ENCODE measurements at regions of chr12 and their contacts with region 1.

Region 1: DNA sequence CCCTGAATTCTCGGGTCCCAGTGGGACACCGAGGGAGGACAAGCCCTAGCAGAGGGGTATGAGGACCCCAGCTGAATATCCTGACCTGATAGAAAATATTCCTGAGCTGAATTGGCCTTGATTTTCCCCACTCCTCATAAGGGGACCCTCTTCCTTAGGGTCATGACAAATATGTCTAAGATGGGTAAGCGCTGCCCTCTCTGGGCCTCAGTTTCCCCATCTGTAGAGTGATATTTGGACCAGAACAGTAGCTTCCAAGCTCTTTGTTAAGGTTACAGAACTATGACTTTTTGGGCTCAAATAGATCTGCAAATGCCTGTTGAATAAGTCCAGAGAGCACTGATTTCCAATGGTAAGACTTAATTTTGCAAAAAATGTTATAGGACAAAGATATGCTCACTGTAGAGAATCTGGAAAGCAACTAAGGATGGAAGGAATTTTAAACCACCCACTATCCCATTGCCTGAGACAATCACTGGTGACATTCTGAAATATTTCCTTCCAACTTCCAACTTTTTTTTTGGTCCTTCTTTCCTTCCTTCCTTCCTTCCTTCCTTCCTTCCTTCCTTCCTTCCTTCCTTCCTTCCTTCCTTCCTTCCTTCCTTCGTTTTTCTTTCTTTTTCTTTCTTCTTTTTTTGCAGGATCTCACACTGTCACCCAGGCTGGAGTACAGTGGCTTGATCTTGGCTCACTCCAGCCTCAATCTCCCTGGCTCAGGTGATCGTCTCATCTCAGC is 32.0 kb downstream of the MYL2 start:
- DNase-seq: no peak
- ATAC-seq: no peak
- H3K4me3 Mint-ChIP-seq: no peak overlapping the region
- H3K27ac Mint-ChIP-seq: no peak overlapping the region
- H3K4me1 Mint-ChIP-seq: peaks cover 2% of the 10 kb centered on the region
- H3K27me3 Mint-ChIP-seq: peaks cover 3% of the 10 kb centered on the region
- CTCF ChIP-seq: no peak

Region 2: GRCh38 chr12:110704748-110705147 is 183.7 kb before region 1 on chr12:
- CTCF ChIA-PET with region 1: interaction called, 12 read pairs
- POLR2A ChIA-PET with region 1: no interaction called
- DNase-seq: peak; percentile 42
- ATAC-seq: peak; percentile 88
- H3K4me3 Mint-ChIP-seq: no peak overlapping the region
- H3K27ac Mint-ChIP-seq: no peak overlapping the region
- H3K4me1 Mint-ChIP-seq: 0 out of 2 replicates have a peak, but pooled peaks cover 2% of the 10 kb centered on the region
- H3K27me3 Mint-ChIP-seq: no peaks in the 10 kb centered on the region; the same call in 1 of the 2 replicates
- CTCF ChIP-seq: no peak

Region 3: GRCh38 chr12:110809149-110809548 is 79.3 kb before region 1 on chr12:
- CTCF ChIA-PET with region 1: no interaction called
- POLR2A ChIA-PET with region 1: no interaction called
- DNase-seq: no peak
- ATAC-seq: no peak; the same call in 1 of the 2 replicates
- H3K4me3 Mint-ChIP-seq: no peak overlapping the region
- H3K27ac Mint-ChIP-seq: no peak overlapping the region
- H3K4me1 Mint-ChIP-seq: peaks cover 27% of the 10 kb centered on the region
- H3K27me3 Mint-ChIP-seq: peaks cover 56% of the 10 kb centered on the region
- CTCF ChIP-seq: no peak

Region 4: DNA sequence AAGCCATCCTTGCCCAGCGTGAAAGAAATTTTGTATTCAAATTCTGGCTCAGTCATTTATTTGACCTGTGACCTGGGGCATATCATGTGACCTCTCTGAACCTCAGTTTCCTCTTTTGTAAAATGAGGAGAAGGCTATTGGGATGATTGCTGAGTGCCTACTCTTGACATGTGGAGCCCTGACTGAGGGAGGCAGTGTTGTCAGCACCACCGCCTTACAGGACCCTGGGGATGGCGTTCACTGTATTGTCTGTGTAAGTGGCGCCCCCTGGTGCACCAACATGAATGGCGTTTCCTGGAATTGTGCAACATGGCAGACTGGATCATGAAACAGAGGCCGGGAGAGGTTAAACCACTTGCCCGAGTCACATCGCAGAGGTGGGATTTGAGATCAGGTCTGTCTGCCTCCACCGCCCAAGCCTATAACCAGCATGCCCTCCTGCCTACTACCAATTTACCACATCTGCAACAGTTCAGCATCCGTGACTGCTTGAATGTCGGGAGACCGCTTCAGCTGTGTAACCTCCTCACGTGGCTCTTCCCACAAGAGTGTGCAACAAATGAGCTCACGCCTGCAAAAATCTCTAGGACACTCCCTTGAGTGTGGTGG is 61.7 kb before region 1 on chr12:
- CTCF ChIA-PET with region 1: interaction called, 18 read pairs
- POLR2A ChIA-PET with region 1: no interaction called
- DNase-seq: peak; percentile 95
- ATAC-seq: peak; percentile 98
- H3K4me3 Mint-ChIP-seq: peak overlapping the region; percentile 8; the same call in 1 of the 2 replicates
- H3K27ac Mint-ChIP-seq: no peak overlapping the region
- H3K4me1 Mint-ChIP-seq: 0 out of 2 replicates have a peak, but pooled peaks cover 4% of the 10 kb centered on the region
- H3K27me3 Mint-ChIP-seq: peaks cover 19% of the 10 kb centered on the region
- CTCF ChIP-seq: peak; percentile 90

Measured in WTC11 (cell line).